Activated naive CD4-positive, alpha-beta T cell treated with anti-CD3 and anti-CD28 coated beads for 36 hours (primary cell): ENCODE measurements at regions of chr12 and their contacts with region 1.

Region 1: GRCh38 chr12:9786726-9787717 is 26.3 kb upstream of the CD69 start:
- DNase-seq: no peak
- H3K4me3 Mint-ChIP-seq: peak overlapping the region; percentile 34
- H3K27ac Mint-ChIP-seq: no peak overlapping the region
- H3K4me1 Mint-ChIP-seq: peaks cover 64% of the 10 kb centered on the region
- H3K27me3 Mint-ChIP-seq: no peaks in the 10 kb centered on the region

Region 2: GRCh38 chr12:9732921-9733461 is 54.0 kb before region 1 on chr12 and contains the start of gene CLECL1:
- CTCF ChIA-PET with region 1: no interaction called
- intact Hi-C with region 1: no loop called
- DNase-seq: peak; percentile 44
- H3K4me3 Mint-ChIP-seq: peak within 1 kb of the TSS; percentile 63
- H3K27ac Mint-ChIP-seq: peak within 1 kb of the TSS; percentile 59
- H3K4me1 Mint-ChIP-seq: peaks cover 54% of the 10 kb centered on the region
- H3K27me3 Mint-ChIP-seq: no peaks in the 10 kb centered on the region
- total RNA-seq, gene CLECL1: 1.7 to 1.9 TPM

Region 3: GRCh38 chr12:9773216-9773877 is 13.7 kb before region 1 on chr12:
- CTCF ChIA-PET with region 1: interaction called, 7 read pairs
- intact Hi-C with region 1: loop called (anchors 1 kb)
- DNase-seq: no peak
- H3K4me3 Mint-ChIP-seq: peak overlapping the region; percentile 53
- H3K27ac Mint-ChIP-seq: peak overlapping the region; percentile 82
- H3K4me1 Mint-ChIP-seq: peaks cover 86% of the 10 kb centered on the region
- H3K27me3 Mint-ChIP-seq: no peaks in the 10 kb centered on the region

Region 4: DNA sequence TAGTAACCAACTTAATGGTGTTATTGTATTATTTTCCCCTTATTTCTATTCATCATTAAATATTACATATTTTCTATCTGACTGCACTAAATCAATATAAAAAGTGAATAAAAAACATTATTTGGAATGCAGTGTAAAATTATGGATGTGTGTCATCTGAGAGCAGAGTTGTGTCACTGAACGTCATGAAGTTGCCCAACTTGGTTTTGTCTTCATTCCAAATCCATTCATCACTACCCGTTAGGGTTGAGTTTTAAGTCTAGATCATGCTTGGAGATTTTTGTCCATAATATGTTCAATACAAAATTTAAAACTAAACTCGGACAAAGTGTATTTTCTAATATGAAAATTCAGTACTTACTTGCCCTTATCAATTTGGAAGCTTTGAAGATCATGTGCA is 56.4 kb after region 1 on chr12:
- CTCF ChIA-PET with region 1: no interaction called
- intact Hi-C with region 1: no loop called
- DNase-seq: no peak
- H3K4me3 Mint-ChIP-seq: no peak overlapping the region
- H3K27ac Mint-ChIP-seq: no peak overlapping the region
- H3K4me1 Mint-ChIP-seq: no peaks in the 10 kb centered on the region
- H3K27me3 Mint-ChIP-seq: no peaks in the 10 kb centered on the region

Region 5: GRCh38 chr12:9883175-9883574 is 96.2 kb after region 1 on chr12:
- CTCF ChIA-PET with region 1: no interaction called
- intact Hi-C with region 1: no loop called
- DNase-seq: no peak
- H3K4me3 Mint-ChIP-seq: no peak overlapping the region
- H3K27ac Mint-ChIP-seq: no peak overlapping the region
- H3K4me1 Mint-ChIP-seq: peaks cover 2% of the 10 kb centered on the region
- H3K27me3 Mint-ChIP-seq: no peaks in the 10 kb centered on the region